ENCODE measurements at regions of chr6 and their contacts with region 1.

Region 1: GRCh38 chr6:24699521-24700359 is 19.2 kb downstream of the C6orf62 start:
- DNase-seq: no peak
- ATAC-seq: peak in 1 of 2 donors; percentile 66

Region 2: DNA sequence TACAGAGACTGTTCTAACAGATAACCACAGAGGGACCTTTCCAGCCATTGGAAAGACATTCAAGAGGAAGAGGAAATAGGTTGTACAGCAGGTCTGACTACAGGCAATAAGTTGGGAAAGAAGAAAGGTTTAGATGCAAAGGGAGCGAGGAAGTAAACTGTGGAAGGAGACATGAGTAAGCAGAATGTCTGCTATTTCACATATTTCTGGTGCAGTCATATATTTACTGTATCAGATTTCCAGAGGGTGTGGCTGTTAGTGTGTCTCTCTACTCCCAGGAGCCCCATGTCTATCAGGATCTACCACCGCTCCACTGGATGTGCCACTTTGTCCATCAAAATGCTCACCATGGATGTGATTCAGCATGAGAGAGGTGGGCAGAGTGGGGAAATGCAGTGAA is 271.1 kb before region 1 on chr6:
- intact Hi-C with region 1: loop called (anchors 10 kb)
- DNase-seq: no peak
- ATAC-seq: no peak